ENCODE measurements at regions of chrX and their contacts with region 1.

Region 1: DNA sequence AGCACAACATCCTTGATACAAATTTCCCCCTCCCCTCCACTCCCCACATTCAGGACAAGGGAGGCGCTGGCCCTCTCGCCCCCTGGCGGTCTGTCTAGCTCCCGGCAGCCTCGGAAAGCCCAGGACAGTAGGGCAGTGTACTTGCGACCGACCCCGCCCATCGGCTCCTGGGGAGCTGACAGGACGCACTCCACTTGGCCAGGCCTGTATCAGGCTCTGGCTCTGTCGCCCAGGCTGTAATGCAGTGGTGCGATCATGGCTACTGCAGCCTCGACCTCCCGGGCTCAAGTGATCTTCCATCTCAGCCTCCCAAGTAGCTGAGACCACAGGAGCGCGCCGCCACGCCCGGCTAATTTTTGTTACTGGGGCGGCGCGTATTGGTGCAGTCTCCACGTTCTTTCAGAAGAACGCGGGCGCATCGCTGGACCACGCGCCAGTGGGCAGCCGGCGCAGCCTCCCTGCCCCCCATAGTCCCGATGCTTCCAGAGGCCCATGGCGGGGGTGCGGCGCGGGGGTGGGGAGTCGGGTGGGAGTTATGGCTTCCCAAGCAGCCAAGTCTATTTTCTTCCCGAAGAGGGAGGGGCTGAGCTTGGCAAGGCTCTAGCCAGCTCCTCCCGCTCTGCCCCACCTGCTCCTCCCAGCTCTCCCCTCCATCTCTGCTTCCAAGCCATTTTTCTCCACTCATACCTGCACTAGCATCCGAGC is 7.8 kb upstream of the AKAP14 start:
- DNase-seq: peak; percentile 93

Region 2: GRCh38 chrX:119852382-119853353 is 35.2 kb before region 1 on chrX and contains the start of gene UPF3B:
- CTCF ChIA-PET with region 1: no interaction called
- POLR2A ChIA-PET with region 1: interaction called, 14 read pairs
- DNase-seq: peak; percentile 99

Measured in HEK293T (cell line).